MCF 10A (cell line): ENCODE measurements at regions of chr15 and their contacts with region 1.

Region 1: GRCh38 chr15:45457641-45458433 is 64.7 kb downstream of the SLC30A4 start:
- DNase-seq: peak; percentile 88
- H3K4me3 Mint-ChIP-seq: peak overlapping the region; percentile 72
- H3K27ac Mint-ChIP-seq: peak overlapping the region; percentile 70
- H3K4me1 Mint-ChIP-seq: peaks cover 28% of the 10 kb centered on the region
- H3K27me3 Mint-ChIP-seq: no peaks in the 10 kb centered on the region
- CTCF ChIP-seq: peak; percentile 68

Region 2: DNA sequence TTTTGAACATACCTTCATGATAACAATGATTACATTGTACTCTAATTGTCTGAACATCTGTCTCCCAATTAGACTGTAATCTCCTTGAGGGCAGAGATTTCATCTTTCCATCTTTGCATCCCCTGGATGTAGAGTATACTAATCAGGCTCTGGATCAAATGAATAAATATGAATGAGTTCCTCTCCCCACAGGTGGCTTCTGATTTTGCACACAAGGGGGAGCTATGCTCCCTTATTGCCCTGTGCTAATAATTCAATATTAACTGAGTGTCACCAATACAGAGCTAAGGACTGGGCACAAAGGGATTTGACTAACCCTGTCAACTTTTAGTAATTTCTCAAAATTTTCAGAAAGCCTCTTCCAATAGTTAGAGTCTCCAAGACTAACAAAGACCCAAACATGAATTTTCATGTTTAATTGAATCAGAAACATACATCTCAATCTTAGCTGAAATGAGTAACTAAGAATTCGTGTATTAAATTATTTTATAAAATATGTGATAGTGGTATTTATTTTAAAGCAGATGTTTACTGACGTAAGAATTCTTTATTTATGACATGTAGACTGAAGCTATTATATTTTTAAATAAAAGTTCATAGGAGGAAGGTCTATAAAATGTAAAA is 331.2 kb before region 1 on chr15:
- CTCF ChIA-PET with region 1: no interaction called
- POLR2A ChIA-PET with region 1: no interaction called
- intact Hi-C with region 1: loop called (anchors 5 kb)
- DNase-seq: peak; percentile 63
- H3K4me3 Mint-ChIP-seq: no peak overlapping the region
- H3K27ac Mint-ChIP-seq: no peak overlapping the region
- H3K4me1 Mint-ChIP-seq: peaks cover 11% of the 10 kb centered on the region
- H3K27me3 Mint-ChIP-seq: peaks cover 21% of the 10 kb centered on the region
- CTCF ChIP-seq: peak; percentile 70

Region 3: GRCh38 chr15:45333550-45333949 is 124.3 kb before region 1 on chr15:
- CTCF ChIA-PET with region 1: no interaction called
- POLR2A ChIA-PET with region 1: no interaction called
- intact Hi-C with region 1: no loop called
- DNase-seq: peak; percentile 9
- H3K4me3 Mint-ChIP-seq: no peak overlapping the region
- H3K27ac Mint-ChIP-seq: no peak overlapping the region
- H3K4me1 Mint-ChIP-seq: no peaks in the 10 kb centered on the region
- H3K27me3 Mint-ChIP-seq: peaks cover 4% of the 10 kb centered on the region
- CTCF ChIP-seq: no peak

Region 4: DNA sequence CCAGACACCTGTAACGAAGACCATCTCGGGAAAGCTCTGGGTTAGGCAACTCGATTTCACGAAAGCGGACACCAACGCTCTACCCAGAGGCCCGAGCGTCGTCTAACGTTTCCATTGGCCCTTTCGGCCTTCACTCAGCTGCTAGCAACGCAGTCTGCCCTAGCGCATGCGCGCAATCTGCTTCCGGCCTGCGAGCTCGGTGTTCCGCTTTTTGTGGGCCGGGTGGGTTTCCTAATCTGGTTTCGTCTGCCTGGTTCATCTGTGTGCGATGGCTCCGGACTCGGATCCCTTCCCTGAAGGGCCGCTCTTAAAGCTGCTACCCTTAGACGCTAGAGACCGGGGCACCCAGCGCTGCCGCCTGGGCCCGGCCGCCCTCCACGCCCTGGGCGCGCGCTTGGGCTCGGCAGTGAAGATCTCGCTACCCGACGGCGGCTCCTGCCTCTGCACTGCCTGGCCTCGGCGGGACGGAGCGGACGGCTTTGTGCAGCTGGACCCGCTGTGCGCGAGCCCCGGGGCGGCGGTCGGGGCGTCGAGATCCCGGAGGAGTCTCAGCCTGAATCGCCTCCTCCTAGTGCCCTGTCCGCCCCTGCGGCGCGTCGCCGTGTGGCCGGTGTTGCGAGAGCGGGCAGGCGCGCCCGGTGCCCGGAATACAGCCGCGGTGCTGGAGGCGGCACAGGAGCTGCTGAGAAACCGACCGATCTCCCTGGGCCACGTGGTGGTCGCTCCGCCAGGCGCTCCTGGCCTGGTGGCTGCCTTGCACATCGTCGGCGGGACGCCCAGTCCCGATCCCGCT is 55.5 kb before region 1 on chr15:
- CTCF ChIA-PET with region 1: interaction called, 10 read pairs
- POLR2A ChIA-PET with region 1: interaction called, 4 read pairs
- intact Hi-C with region 1: loop called (anchors 2 kb)
- DNase-seq: peak; percentile 99
- H3K4me3 Mint-ChIP-seq: peak overlapping the region; percentile 91
- H3K27ac Mint-ChIP-seq: peak overlapping the region; percentile 88
- H3K4me1 Mint-ChIP-seq: peaks cover 27% of the 10 kb centered on the region
- H3K27me3 Mint-ChIP-seq: no peaks in the 10 kb centered on the region
- CTCF ChIP-seq: no peak

Region 5: DNA sequence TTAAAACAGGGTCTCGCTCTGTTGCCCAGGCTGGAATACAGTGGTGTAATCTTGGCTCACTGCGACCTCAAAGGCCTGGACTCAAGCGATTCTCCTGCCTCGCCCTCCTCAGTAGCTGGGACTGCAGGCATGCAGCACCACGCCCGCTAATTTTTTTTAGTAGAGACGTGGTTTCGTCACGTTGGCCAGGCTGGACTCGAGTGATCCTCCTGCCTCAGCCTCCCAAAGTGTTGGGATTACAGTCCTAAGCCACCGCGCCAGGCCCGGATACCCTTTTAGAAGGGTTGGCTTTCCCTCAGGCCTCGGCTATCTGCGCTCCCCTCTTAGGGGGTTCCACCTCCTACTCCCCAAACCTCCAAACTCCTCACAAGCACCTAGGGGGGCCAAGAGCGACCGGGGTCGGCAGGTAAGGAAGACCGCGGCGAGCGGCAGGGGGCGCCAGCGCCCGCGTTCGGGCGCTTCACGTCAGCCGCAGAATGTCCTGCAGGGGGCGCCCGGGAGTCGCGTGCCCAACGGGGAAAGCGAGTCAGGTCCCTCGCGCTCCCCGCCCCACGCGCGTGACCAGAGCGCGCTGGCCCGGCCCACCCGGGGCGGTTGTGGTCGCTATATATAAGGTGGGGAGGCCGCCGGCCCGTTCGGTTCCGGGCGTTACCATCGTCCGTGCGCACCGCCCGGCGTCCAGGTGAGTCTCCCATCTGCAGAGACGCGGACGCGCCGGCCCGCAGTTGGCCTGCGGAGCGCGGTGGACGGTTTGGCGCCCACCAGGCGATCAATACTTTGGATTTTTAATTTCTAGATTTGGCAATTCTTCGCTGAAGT is 27.7 kb before region 1 on chr15:
- CTCF ChIA-PET with region 1: interaction called, 82 read pairs
- POLR2A ChIA-PET with region 1: interaction called, 20 read pairs
- intact Hi-C with region 1: loop called (anchors 1 kb)
- DNase-seq: peak; percentile 52
- H3K4me3 Mint-ChIP-seq: no peak overlapping the region
- H3K27ac Mint-ChIP-seq: no peak overlapping the region
- H3K4me1 Mint-ChIP-seq: peaks cover 6% of the 10 kb centered on the region
- H3K27me3 Mint-ChIP-seq: no peaks in the 10 kb centered on the region
- CTCF ChIP-seq: peak; percentile 100

Region 6: GRCh38 chr15:45468294-45468693 is 10.5 kb after region 1 on chr15:
- CTCF ChIA-PET with region 1: interaction called, 17 read pairs
- POLR2A ChIA-PET with region 1: no interaction called
- intact Hi-C with region 1: no loop called
- DNase-seq: no peak
- H3K4me3 Mint-ChIP-seq: no peak overlapping the region
- H3K27ac Mint-ChIP-seq: no peak overlapping the region
- H3K4me1 Mint-ChIP-seq: no peaks in the 10 kb centered on the region
- H3K27me3 Mint-ChIP-seq: no peaks in the 10 kb centered on the region
- CTCF ChIP-seq: no peak

Region 7: DNA sequence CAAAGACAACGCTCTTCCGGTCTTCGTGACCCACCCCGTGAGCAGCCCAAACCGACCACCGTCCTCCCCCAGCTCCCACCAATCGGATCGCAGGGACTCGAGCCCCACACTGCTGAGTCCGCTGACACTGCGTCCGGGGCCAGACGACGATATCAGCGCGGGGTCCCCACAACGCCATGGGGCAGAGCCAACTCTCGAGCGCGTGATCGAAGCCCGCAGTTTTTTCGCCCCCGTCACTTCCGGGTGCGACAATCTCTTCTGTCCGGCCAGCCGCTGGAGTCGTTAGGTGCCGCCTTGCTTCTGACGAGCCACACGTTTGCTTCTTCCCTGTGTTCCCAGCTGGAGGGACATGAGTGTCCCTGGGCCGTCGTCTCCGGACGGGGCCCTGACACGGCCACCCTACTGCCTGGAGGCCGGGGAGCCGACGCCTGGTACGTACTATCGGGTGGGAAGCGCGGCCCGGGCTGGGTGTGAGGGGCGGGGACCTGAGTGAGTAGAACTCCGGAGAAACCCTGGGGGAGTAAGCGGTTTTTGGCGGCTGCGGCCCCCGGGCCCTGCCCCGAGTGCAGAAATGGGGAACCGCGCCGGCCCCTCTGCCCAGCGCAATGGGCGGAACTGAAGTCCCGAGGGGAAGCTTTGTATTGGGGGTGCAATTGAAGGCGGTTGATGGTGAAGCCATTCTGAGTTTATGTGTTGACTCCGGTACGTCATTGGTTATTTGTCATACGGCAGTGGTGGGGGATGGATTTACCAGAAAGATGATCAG is 129.4 kb after region 1 on chr15 and contains the start of gene BLOC1S6:
- CTCF ChIA-PET with region 1: interaction called, 35 read pairs
- POLR2A ChIA-PET with region 1: interaction called, 25 read pairs
- intact Hi-C with region 1: no loop called
- DNase-seq: peak; percentile 88
- H3K4me3 Mint-ChIP-seq: peak within 1 kb of the TSS; percentile 73
- H3K27ac Mint-ChIP-seq: peak within 1 kb of the TSS; percentile 100
- H3K4me1 Mint-ChIP-seq: peaks cover 16% of the 10 kb centered on the region
- H3K27me3 Mint-ChIP-seq: peaks cover 4% of the 10 kb centered on the region
- CTCF ChIP-seq: no peak
- total RNA-seq, gene BLOC1S6: 54.6 and 68.5 TPM in 2 replicates

Region 8: DNA sequence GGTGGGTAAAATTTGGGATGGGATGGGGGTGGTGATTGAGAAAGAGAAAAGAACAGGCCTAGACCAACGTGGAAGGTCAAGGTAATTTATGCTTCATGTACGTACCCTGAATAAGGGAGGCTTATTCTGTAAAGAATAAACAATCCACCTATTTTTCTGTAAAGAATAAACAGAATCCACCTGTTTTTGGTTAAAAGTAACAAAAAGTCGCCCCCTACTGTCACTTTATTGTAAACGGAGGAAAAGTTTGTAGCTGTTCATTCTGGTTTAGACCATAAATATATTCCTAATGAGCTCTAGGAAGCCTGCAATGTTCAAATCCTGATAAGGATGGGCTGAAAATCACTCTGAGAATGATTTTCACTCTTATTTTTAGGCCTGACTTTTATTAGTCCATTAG is 153.5 kb after region 1 on chr15:
- CTCF ChIA-PET with region 1: interaction called, 104 read pairs
- POLR2A ChIA-PET with region 1: interaction called, 15 read pairs
- intact Hi-C with region 1: loop called (anchors 1 kb)
- DNase-seq: peak; percentile 37
- H3K4me3 Mint-ChIP-seq: no peak overlapping the region
- H3K27ac Mint-ChIP-seq: no peak overlapping the region
- H3K4me1 Mint-ChIP-seq: peaks cover 6% of the 10 kb centered on the region
- H3K27me3 Mint-ChIP-seq: no peaks in the 10 kb centered on the region
- CTCF ChIP-seq: peak; percentile 43